IMR-90 (cell line): ENCODE measurements at regions of chr15 and their contacts with region 1.

Region 1: GRCh38 chr15:33194704-33195670 is at the start of gene FMN1:
- DNase-seq: peak; percentile 84
- ATAC-seq: peak; percentile 100
- H3K4me3 ChIP-seq: peak within 1 kb of the TSS; percentile 79
- H3K27ac ChIP-seq: no peak within 1 kb of the TSS
- H3K4me1 ChIP-seq: peaks cover 2% of the 10 kb centered on the region; the same call in 1 of the 2 replicates
- H3K27me3 ChIP-seq: peaks cover 37% of the 10 kb centered on the region
- CTCF ChIP-seq: no peak
- POLR2A ChIP-seq: no peak
- RAD21 ChIP-seq: no peak
- total RNA-seq, gene FMN1: 17.6 and 29.4 TPM in 2 replicates

Region 2: DNA sequence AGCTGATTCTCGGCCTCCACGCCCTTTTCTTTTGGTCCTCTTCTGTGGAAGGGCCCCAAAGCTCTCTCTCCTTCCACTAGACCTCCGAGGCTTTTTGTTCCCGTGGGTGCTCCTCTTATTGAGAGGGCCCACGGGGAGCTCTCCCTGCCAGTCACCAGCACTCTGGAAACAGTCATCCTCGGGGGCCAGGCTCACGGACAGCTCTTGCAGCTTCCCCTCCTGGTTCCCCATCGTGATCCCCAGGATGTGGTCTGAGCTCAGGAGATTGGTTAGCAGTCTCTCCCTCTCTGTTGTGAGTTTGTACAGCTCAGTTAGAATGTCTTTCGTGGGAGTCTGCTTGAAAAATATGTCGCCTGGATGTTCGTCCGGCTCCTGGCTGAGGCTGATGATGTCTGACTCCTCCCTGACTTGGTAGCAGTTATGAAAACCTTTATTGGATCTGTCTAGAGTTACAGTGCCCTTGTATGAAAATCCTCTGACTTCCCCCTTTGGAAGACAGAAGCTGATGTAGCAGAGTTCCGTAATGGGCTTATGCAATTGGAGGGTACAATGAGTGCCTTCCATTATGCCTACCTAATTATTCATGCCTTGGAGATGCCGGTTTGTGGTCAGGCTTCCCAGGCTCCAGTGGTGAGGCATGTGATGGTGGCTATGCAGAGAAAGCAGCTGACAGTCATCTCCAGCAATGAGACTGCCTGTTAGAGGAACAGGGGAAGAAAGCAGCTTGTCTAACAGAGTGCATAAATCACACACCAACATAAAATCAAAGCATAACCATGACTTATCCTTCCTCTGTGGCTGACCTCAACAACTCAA is 40.4 kb before region 1 on chr15:
- CTCF ChIA-PET with region 1: no interaction called
- POLR2A ChIA-PET with region 1: no interaction called
- dilution Hi-C with region 1: no loop called
- in situ Hi-C with region 1: no loop called
- intact Hi-C with region 1: no loop called
- DNase-seq: peak; percentile 55
- ATAC-seq: peak; percentile 29; the same call in 1 of the 2 replicates
- H3K4me3 ChIP-seq: no peak overlapping the region
- H3K27ac ChIP-seq: no peak overlapping the region
- H3K4me1 ChIP-seq: 0 out of 2 replicates have a peak, but pooled peaks cover 2% of the 10 kb centered on the region
- H3K27me3 ChIP-seq: peaks cover 13% of the 10 kb centered on the region
- CTCF ChIP-seq: no peak
- POLR2A ChIP-seq: no peak
- RAD21 ChIP-seq: no peak

Region 3: DNA sequence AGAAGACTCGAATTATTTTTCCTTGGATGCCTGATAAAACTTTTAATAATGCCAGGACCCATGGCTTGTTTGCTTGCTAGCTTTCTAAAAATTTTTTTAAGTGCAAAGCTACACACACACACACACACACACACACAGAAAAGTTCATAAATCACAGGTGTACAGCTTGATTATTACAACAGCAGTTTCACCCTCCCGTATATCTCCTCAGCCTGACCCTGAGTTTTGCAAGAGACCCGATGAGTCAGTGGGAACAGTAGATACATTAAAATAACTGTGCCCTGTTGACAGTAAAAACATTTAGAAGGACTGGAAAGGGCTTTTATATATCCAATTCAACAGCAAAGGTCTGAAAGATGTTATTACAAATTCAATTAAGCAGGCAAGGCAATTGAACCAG is 1076.5 kb after region 1 on chr15:
- CTCF ChIA-PET with region 1: no interaction called
- POLR2A ChIA-PET with region 1: interaction called, 22 read pairs
- dilution Hi-C with region 1: no loop called
- in situ Hi-C with region 1: no loop called
- intact Hi-C with region 1: no loop called
- DNase-seq: peak; percentile 88
- ATAC-seq: peak; percentile 87
- H3K4me3 ChIP-seq: no peak overlapping the region
- H3K27ac ChIP-seq: no peak overlapping the region
- H3K4me1 ChIP-seq: peaks cover 3% of the 10 kb centered on the region
- H3K27me3 ChIP-seq: no peaks in the 10 kb centered on the region
- CTCF ChIP-seq: no peak
- POLR2A ChIP-seq: no peak
- RAD21 ChIP-seq: no peak